ENCODE measurements at regions of chr11 and their contacts with region 1.

Region 1: DNA sequence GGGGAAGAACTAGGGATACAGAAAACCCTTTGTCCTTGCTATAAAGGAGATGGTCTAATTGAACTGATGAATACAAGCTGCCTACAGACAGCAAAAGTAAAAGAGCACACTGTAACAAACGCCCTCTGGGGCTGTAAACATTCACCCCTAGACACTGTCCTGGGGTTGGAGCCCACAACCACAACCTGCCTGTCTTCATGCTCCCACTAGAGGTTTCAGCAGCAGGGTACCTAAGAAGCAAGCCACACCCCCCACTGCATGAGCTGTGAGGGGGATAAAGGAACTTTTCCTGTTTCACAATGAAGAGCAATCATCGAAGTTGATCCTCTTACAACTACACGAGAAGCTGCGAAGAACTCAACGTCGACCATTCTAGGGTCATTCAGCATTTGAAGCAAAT is 90.5 kb upstream of the LUZP2 start:
- DNase-seq: no peak
- ATAC-seq: no peak
- H3K4me3 ChIP-seq: no peak overlapping the region
- H3K4me3 Mint-ChIP-seq: no peak overlapping the region
- H3K27ac ChIP-seq: no peak overlapping the region
- H3K27ac Mint-ChIP-seq: no peak overlapping the region
- H3K4me1 ChIP-seq: no peaks in the 10 kb centered on the region
- H3K4me1 Mint-ChIP-seq: no peaks in the 10 kb centered on the region
- H3K27me3 ChIP-seq: no peaks in the 10 kb centered on the region
- H3K27me3 Mint-ChIP-seq: no peaks in the 10 kb centered on the region
- CTCF ChIP-seq: no peak

Region 2: GRCh38 chr11:23021287-23021863 is 1385.0 kb before region 1 on chr11:
- intact Hi-C with region 1: loop called (anchors 10 kb)
- DNase-seq: peak in 1 of 2 donors; percentile 10
- ATAC-seq: peak; percentile 48 to 64 (median 53)
- H3K4me3 ChIP-seq: no peak overlapping the region
- H3K4me3 Mint-ChIP-seq: no peak overlapping the region
- H3K27ac ChIP-seq: no peak overlapping the region
- H3K27ac Mint-ChIP-seq: no peak overlapping the region
- H3K4me1 ChIP-seq: no peaks in the 10 kb centered on the region
- H3K4me1 Mint-ChIP-seq: peaks cover 6 to 8% of the 10 kb centered on the region in 2 donors
- H3K27me3 ChIP-seq: no peaks in the 10 kb centered on the region
- H3K27me3 Mint-ChIP-seq: no peaks in the 10 kb centered on the region
- CTCF ChIP-seq: peak; percentile 68

Measured in natural killer cell (primary cell).